CD8-positive, alpha-beta T cell (primary cell): ENCODE measurements at regions of chr11 and their contacts with region 1.

Region 1: DNA sequence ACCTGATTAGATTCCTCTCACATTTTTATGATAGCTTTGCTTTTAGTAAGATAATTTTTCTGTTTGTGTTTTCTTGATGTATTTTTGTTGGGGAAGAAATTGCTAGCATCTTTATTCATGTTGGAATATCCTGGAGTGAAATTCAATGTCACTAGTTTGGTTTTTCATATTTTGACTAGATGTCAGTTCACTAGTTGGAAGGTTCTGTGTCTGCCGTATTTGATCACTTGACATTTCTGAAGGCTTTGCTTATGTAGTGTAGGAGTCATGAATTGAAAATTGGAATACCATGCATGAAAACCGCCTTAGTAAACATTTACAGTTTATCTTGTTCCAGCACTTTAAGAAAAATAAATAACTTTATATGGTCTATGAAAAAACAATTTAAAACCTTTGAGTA is 348.4 kb downstream of the AASDHPPT start:
- DNase-seq: no peak
- ATAC-seq: no peak
- H3K4me3 ChIP-seq: no peak overlapping the region
- H3K4me3 Mint-ChIP-seq: no peak overlapping the region
- H3K27ac ChIP-seq: no peak overlapping the region
- H3K27ac Mint-ChIP-seq: no peak overlapping the region
- H3K4me1 ChIP-seq: no peaks in the 10 kb centered on the region
- H3K4me1 Mint-ChIP-seq: no peaks in the 10 kb centered on the region
- H3K27me3 ChIP-seq: no peaks in the 10 kb centered on the region
- H3K27me3 Mint-ChIP-seq: no peaks in the 10 kb centered on the region
- CTCF ChIP-seq: no peak

Region 2: GRCh38 chr11:106379718-106380117 is 46.1 kb before region 1 on chr11:
- CTCF ChIA-PET with region 1: no interaction called
- POLR2A ChIA-PET with region 1: no interaction called
- intact Hi-C with region 1: loop called in 1 of 2 experiments (anchors 1 kb)
- DNase-seq: no peak
- ATAC-seq: no peak
- H3K4me3 ChIP-seq: no peak overlapping the region
- H3K4me3 Mint-ChIP-seq: no peak overlapping the region
- H3K27ac ChIP-seq: no peak overlapping the region
- H3K27ac Mint-ChIP-seq: no peak overlapping the region
- H3K4me1 ChIP-seq: no peaks in the 10 kb centered on the region
- H3K4me1 Mint-ChIP-seq: no peaks in the 10 kb centered on the region
- H3K27me3 ChIP-seq: no peaks in the 10 kb centered on the region
- H3K27me3 Mint-ChIP-seq: no peaks in the 10 kb centered on the region
- CTCF ChIP-seq: no peak